ENCODE measurements at regions of chr2 and their contacts with region 1.

Region 1: GRCh38 chr2:191869178-191869577 is 22.3 kb upstream of the CAVIN2 start:
- DNase-seq: peak; percentile 65
- H3K4me3 ChIP-seq: no peak overlapping the region
- H3K27ac ChIP-seq: no peak overlapping the region
- H3K4me1 ChIP-seq: peaks cover 39% of the 10 kb centered on the region
- H3K27me3 ChIP-seq: no peaks in the 10 kb centered on the region
- CTCF ChIP-seq: peak; percentile 25 to 37
- POLR2A ChIP-seq: no peak

Region 2: GRCh38 chr2:191800874-191801273 is 68.3 kb before region 1 on chr2:
- CTCF ChIA-PET with region 1: no interaction called
- POLR2A ChIA-PET with region 1: no interaction called
- dilution Hi-C with region 1: no loop called
- intact Hi-C with region 1: loop called (anchors 1 kb)
- DNase-seq: no peak
- H3K4me3 ChIP-seq: no peak overlapping the region
- H3K27ac ChIP-seq: no peak overlapping the region
- H3K4me1 ChIP-seq: no peaks in the 10 kb centered on the region
- H3K27me3 ChIP-seq: no peaks in the 10 kb centered on the region
- CTCF ChIP-seq: no peak
- POLR2A ChIP-seq: no peak

Region 3: GRCh38 chr2:191857259-191857805 is 11.8 kb before region 1 on chr2:
- CTCF ChIA-PET with region 1: interaction called, 19 read pairs
- POLR2A ChIA-PET with region 1: interaction called, 9 read pairs
- dilution Hi-C with region 1: no loop called
- intact Hi-C with region 1: loop called (anchors 1 kb)
- DNase-seq: peak; percentile 97
- H3K4me3 ChIP-seq: no peak overlapping the region
- H3K27ac ChIP-seq: peak overlapping the region; percentile 93
- H3K4me1 ChIP-seq: peaks cover 56% of the 10 kb centered on the region
- H3K27me3 ChIP-seq: no peaks in the 10 kb centered on the region
- CTCF ChIP-seq: no peak
- POLR2A ChIP-seq: peak; percentile 74

Region 4: DNA sequence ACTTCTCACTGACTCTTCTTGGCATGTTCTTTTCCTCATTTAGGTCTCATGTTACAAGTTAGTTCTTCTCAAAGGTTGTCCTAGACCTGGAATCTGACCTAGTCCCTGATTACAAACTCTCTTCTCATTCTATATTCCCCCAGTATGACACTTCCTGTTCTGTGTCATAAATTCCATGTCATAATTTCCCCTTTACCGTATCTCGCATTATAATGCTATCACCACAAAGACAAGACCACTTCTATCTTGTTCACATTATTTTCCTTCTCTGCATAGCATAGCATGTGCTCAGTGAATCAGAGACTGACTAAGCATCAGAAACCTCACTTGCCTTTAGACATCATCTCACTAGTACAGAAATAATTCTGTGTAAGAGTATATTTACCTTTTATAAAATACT is 41.3 kb after region 1 on chr2:
- CTCF ChIA-PET with region 1: interaction called, 15 read pairs
- POLR2A ChIA-PET with region 1: no interaction called
- dilution Hi-C with region 1: no loop called
- intact Hi-C with region 1: no loop called
- DNase-seq: peak; percentile 92
- H3K4me3 ChIP-seq: no peak overlapping the region
- H3K27ac ChIP-seq: peak overlapping the region; percentile 36
- H3K4me1 ChIP-seq: peaks cover 34% of the 10 kb centered on the region
- H3K27me3 ChIP-seq: no peaks in the 10 kb centered on the region
- CTCF ChIP-seq: no peak
- POLR2A ChIP-seq: no peak

Region 5: GRCh38 chr2:192029089-192029488 is 159.9 kb after region 1 on chr2:
- CTCF ChIA-PET with region 1: interaction called, 5 read pairs
- POLR2A ChIA-PET with region 1: no interaction called
- dilution Hi-C with region 1: no loop called
- intact Hi-C with region 1: loop called (anchors 5 kb)
- DNase-seq: no peak
- H3K4me3 ChIP-seq: no peak overlapping the region
- H3K27ac ChIP-seq: no peak overlapping the region
- H3K4me1 ChIP-seq: no peaks in the 10 kb centered on the region
- H3K27me3 ChIP-seq: no peaks in the 10 kb centered on the region
- CTCF ChIP-seq: no peak
- POLR2A ChIP-seq: no peak